Activated CD4-positive, alpha-beta T cell treated with anti-CD3 and anti-CD28 coated beads, Interleukin-2, amount 10 ng/mL, durations not matched to agents 24 days and 14 days (primary cell): ENCODE measurements at regions of chr1 and their contacts with region 1.

Region 1: DNA sequence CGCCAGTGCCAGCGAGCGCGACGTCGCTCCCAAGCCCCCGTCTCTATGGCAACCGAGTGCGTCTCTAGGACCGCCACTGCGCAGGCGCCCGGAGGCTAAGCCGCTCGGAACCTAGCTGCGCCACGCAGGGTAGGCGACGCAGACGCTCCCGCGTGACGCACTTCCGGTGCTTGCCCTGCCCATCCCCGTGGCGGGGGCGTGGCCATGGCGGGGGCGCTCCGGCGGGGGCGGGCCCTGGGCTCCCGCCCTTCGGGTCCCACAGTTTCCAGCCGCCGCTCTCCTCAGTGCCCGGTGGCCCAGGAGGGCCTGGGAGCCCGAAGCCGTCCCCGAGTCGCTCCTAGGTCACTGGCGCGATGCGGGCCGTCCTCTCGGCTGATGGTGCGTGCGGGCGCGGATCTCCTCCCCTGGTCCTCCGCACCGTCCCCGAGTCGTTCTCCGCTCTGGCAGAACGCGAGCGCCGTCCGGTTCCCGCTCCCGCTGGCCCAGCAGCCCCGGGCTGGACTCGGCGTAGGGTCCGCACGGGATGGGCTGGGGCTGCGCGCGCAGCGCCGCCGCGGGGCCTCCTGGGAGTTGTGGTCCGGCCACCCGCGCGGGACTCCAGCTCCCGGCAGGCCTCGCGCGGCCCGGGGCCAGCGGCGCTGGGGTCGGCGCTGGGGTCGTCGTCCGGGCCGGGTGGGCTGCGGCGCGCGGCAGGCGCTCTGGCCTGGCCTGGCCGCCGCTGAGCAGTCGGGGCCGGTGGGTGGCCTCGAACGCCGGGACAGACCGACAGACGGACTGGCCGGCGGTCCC is at the start of gene MIB2:
- DNase-seq: peak; percentile 100
- H3K4me3 Mint-ChIP-seq: peak within 1 kb of the TSS; percentile 96
- H3K27ac Mint-ChIP-seq: peak within 1 kb of the TSS; percentile 98
- H3K4me1 Mint-ChIP-seq: peaks cover 30% of the 10 kb centered on the region
- H3K27me3 Mint-ChIP-seq: no peaks in the 10 kb centered on the region
- total RNA-seq, gene MIB2: 32.7 and 34.1 TPM in 2 replicates

Region 2: GRCh38 chr1:1399187-1399871 is 216.1 kb before region 1 on chr1 and contains the start of gene CCNL2:
- intact Hi-C with region 1: loop called (anchors 1 kb)
- DNase-seq: peak; percentile 100
- H3K4me3 Mint-ChIP-seq: peak within 1 kb of the TSS; percentile 92
- H3K27ac Mint-ChIP-seq: peak within 1 kb of the TSS; percentile 90
- H3K4me1 Mint-ChIP-seq: peaks cover 42% of the 10 kb centered on the region
- H3K27me3 Mint-ChIP-seq: no peaks in the 10 kb centered on the region
- total RNA-seq, gene CCNL2: 144 and 146 TPM in 2 replicates

Region 3: GRCh38 chr1:1471389-1472052 is 143.9 kb before region 1 on chr1 and contains the start of gene ATAD3B:
- intact Hi-C with region 1: loop called (anchors 1 kb)
- DNase-seq: peak; percentile 98
- H3K4me3 Mint-ChIP-seq: peak within 1 kb of the TSS; percentile 90
- H3K27ac Mint-ChIP-seq: peak within 1 kb of the TSS; percentile 82
- H3K4me1 Mint-ChIP-seq: peaks cover 15% of the 10 kb centered on the region
- H3K27me3 Mint-ChIP-seq: no peaks in the 10 kb centered on the region
- total RNA-seq, gene ATAD3B: 98.0 and 98.5 TPM in 2 replicates

Region 4: GRCh38 chr1:1574721-1575537 is 40.5 kb before region 1 on chr1 and contains the start of gene SSU72:
- intact Hi-C with region 1: loop called (anchors 1 kb)
- DNase-seq: peak; percentile 98
- H3K4me3 Mint-ChIP-seq: peak within 1 kb of the TSS; percentile 95
- H3K27ac Mint-ChIP-seq: peak within 1 kb of the TSS; percentile 99
- H3K4me1 Mint-ChIP-seq: peaks cover 23% of the 10 kb centered on the region
- H3K27me3 Mint-ChIP-seq: peaks cover 2% of the 10 kb centered on the region
- total RNA-seq, gene SSU72: 134 TPM in 2 replicates